ENCODE measurements at regions of chr4 and their contacts with region 1.

Region 1: GRCh38 chr4:26860157-26860921 is at the start of gene STIM2:
- DNase-seq: peak; percentile 96
- ATAC-seq: peak; percentile 79
- H3K4me3 Mint-ChIP-seq: peak within 1 kb of the TSS; percentile 91
- H3K27ac Mint-ChIP-seq: peak within 1 kb of the TSS; percentile 99
- H3K4me1 Mint-ChIP-seq: peaks cover 48% of the 10 kb centered on the region
- H3K27me3 Mint-ChIP-seq: no peaks in the 10 kb centered on the region
- CTCF ChIP-seq: peak; percentile 24
- total RNA-seq, gene STIM2: 44.4 to 46.6 TPM

Region 2: GRCh38 chr4:26319467-26319948 is 540.8 kb before region 1 on chr4:
- CTCF ChIA-PET with region 1: no interaction called
- POLR2A ChIA-PET with region 1: no interaction called
- intact Hi-C with region 1: loop called (anchors 10 kb)
- DNase-seq: peak; percentile 99
- ATAC-seq: peak; percentile 67
- H3K4me3 Mint-ChIP-seq: peak overlapping the region; percentile 92
- H3K27ac Mint-ChIP-seq: peak overlapping the region; percentile 100
- H3K4me1 Mint-ChIP-seq: peaks cover 34% of the 10 kb centered on the region
- H3K27me3 Mint-ChIP-seq: no peaks in the 10 kb centered on the region
- CTCF ChIP-seq: no peak

Region 3: GRCh38 chr4:26583865-26584652 is 276.3 kb before region 1 on chr4 and contains the start of gene TBC1D19:
- CTCF ChIA-PET with region 1: no interaction called
- POLR2A ChIA-PET with region 1: interaction called, 3 read pairs
- intact Hi-C with region 1: loop called (anchors 10 kb)
- DNase-seq: peak; percentile 91
- ATAC-seq: peak; percentile 96
- H3K4me3 Mint-ChIP-seq: peak within 1 kb of the TSS; percentile 96
- H3K27ac Mint-ChIP-seq: peak within 1 kb of the TSS; percentile 96
- H3K4me1 Mint-ChIP-seq: peaks cover 21% of the 10 kb centered on the region
- H3K27me3 Mint-ChIP-seq: peaks cover 2% of the 10 kb centered on the region
- CTCF ChIP-seq: no peak
- total RNA-seq, gene TBC1D19: 4.0 to 4.5 TPM

Region 4: DNA sequence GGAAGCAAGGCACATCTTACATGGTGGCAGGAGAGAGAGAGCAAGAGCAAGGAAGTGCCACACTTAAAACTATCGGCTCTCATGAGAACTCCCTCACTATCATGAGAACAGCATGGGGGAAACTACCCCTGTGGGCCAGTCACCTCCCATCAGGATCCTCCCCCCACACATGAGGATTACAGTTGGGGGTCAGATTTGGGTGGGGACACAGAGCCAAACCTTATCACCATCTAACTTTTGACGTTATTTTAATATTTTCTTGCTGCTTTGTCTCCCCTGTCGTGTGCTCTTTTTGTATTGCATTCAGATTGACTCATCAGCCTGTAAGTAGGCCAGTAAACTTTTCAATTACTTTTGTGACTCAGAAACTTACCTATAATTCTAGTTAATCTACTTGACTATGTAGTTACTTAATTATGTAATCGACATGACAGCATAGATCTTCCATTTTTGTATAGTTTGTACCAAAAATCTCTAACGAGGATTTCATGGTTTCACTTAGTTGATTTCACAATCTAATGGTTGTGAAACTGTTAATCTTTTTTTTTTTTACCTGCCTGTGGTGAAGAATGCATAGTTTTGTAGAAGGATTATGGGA is 18.6 kb after region 1 on chr4:
- CTCF ChIA-PET with region 1: interaction called, 8 read pairs
- POLR2A ChIA-PET with region 1: interaction called, 39 read pairs
- intact Hi-C with region 1: loop called (anchors 2 kb)
- DNase-seq: peak; percentile 40
- ATAC-seq: peak; percentile 60
- H3K4me3 Mint-ChIP-seq: peak overlapping the region; percentile 14
- H3K27ac Mint-ChIP-seq: peak overlapping the region; percentile 96
- H3K4me1 Mint-ChIP-seq: peaks cover 81% of the 10 kb centered on the region
- H3K27me3 Mint-ChIP-seq: no peaks in the 10 kb centered on the region
- CTCF ChIP-seq: no peak

Region 5: DNA sequence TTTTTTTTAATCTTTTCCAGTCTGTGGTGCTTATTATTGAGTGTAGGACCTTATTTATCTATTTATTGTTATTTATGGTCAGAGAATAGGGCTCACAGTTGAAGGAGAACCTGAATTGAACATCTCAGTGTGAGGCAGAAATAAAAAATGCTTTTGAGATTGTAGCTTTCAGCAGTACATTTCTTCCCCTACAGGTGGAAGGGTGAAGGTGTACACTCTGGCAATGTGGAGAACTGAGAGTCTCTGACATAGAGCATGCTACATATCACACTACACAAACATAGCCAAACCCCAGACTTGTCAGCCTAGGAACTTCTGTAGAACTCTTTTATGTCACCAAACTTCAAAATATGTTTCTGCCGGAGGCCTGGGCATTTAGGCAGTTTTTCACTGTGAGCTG is 140.5 kb after region 1 on chr4:
- CTCF ChIA-PET with region 1: interaction called, 52 read pairs
- POLR2A ChIA-PET with region 1: interaction called, 21 read pairs
- intact Hi-C with region 1: loop called (anchors 5 kb)
- DNase-seq: no peak
- ATAC-seq: peak; percentile 40
- H3K4me3 Mint-ChIP-seq: no peak overlapping the region
- H3K27ac Mint-ChIP-seq: no peak overlapping the region
- H3K4me1 Mint-ChIP-seq: peaks cover 59% of the 10 kb centered on the region
- H3K27me3 Mint-ChIP-seq: no peaks in the 10 kb centered on the region
- CTCF ChIP-seq: peak; percentile 48